ENCODE measurements at regions of chr15 and their contacts with region 1.

Region 1: DNA sequence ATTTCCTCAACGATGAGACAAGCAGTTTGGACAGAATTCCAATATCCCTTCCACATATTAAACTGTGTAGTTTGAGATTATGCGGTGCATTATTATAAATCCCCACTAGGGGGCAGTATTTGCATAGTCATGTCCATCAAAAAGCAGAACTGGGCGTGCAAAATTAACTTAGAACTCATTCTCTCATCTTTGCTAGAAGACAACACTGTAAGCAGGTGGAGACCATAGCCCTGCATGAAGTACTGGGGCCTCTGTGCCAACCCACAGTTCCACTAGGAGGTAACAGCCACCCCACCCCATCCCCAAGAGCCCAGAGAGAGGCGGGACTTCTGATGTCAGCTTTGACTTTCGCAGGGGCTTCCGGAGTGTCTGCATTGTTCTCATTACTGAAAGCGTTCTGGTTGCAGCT is 106.6 kb upstream of the TMC3 start:
- DNase-seq: no peak
- H3K4me3 ChIP-seq: no peak overlapping the region
- H3K27ac ChIP-seq: no peak overlapping the region
- H3K4me1 ChIP-seq: no peaks in the 10 kb centered on the region
- H3K27me3 ChIP-seq: no peaks in the 10 kb centered on the region
- CTCF ChIP-seq: peak; percentile 80 to 92 (median 87)
- POLR2A ChIP-seq: no peak

Region 2: DNA sequence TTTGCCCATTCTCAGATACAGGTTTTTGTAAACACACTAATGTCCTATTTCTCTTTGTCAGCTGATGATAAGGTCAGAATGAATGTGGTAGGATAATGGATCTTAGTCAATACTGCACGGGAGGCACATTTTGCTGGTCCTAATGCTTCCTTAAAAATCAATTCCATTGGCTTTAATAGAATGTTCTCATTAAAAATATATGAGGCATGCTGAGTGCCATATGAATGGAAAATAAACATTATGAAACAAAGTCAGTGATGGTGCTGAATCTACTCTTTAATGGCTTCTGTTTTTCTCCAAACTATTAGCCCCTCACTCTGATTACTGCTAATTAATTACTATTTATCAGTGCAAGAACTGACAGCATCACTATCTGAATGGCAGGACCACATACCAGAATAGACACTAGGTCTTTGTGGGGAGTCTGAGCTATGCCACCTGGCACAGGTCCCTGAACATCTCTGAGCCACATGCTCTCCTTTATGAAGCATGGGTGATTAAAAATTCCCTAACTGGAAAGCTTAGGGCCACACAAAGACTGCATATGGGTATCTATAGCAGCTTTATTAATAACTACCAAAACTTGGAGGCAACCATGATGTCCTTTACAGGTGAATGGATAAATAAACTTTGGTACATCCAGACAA is 286.3 kb after region 1 on chr15:
- intact Hi-C with region 1: no loop called
- DNase-seq: no peak
- H3K4me3 ChIP-seq: no peak overlapping the region
- H3K27ac ChIP-seq: no peak overlapping the region
- H3K4me1 ChIP-seq: no peaks in the 10 kb centered on the region
- H3K27me3 ChIP-seq: no peaks in the 10 kb centered on the region
- CTCF ChIP-seq: no peak
- POLR2A ChIP-seq: no peak

Region 3: GRCh38 chr15:81939604-81940440 is 459.2 kb after region 1 on chr15:
- intact Hi-C with region 1: loop called (anchors 10 kb)
- DNase-seq: no peak
- H3K4me3 ChIP-seq: no peak overlapping the region
- H3K27ac ChIP-seq: no peak overlapping the region
- H3K4me1 ChIP-seq: no peaks in the 10 kb centered on the region
- H3K27me3 ChIP-seq: no peaks in the 10 kb centered on the region
- CTCF ChIP-seq: peak; percentile 17 to 78 (median 50)
- POLR2A ChIP-seq: no peak

Measured in esophagus squamous epithelium (tissue), 5 donors.